Aorta (tissue), 5 donors: ENCODE measurements at regions of chr7 and their contacts with region 1.

Region 1: DNA sequence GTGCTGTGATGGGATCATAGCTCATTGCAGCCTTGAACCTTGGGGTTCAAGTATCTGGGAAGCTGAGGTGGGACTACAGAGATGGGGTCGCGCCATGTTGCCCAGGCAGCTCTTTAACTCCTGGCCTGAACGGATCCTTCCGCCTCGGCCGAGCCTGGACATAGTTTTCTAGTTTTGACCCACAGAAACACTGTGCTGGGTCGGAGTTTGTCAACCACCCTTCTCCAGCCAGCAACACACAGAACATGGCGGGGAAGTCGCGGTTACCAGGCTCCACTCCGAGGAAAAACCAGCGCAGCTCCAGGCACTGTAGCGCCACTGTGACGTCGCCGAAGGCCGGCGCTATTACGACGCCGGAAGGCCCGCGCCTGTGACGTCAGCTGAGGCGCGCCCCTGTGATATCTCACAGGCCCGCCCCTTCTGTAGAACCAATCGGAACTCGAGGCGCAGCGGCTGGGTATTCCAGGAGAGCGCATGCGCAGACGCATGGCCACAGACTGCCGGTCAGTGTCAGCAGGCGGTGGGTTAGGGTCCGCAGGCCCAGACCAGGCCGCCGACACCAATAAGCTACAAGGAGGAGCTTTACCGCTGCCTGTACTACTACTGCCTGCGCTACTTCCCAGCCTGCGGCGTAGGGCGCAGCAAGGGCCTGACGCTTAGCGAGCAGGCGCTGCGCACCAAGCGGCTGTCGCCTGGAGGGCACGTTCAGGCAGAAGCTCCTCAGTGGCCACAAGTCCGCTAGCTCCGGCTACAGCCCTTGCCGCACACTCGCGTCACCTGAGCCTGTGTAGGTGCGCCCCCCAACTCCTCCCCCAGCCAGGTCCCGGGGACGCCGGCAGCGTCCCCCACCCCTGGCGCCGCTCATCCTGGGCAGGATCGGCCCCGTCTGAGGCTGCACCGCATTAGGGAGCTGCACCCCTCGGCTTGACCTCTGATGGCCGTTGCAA is 135.2 kb upstream of the KCTD7 start:
- DNase-seq: peak; percentile 99
- ATAC-seq: peak; percentile 100
- H3K4me3 ChIP-seq: peak overlapping the region; percentile 53 to 59
- H3K27ac ChIP-seq: peak overlapping the region; percentile 49 to 84
- H3K4me1 ChIP-seq: peaks cover 0 to 5% of the 10 kb centered on the region in 2 donors
- H3K27me3 ChIP-seq: no peaks in the 10 kb centered on the region

Region 2: GRCh38 chr7:66140924-66141323 is 352.6 kb before region 1 on chr7:
- intact Hi-C with region 1: loop called in 1 of 2 experiments (anchors 10 kb)
- DNase-seq: peak in 1 of 2 donors; percentile 83
- ATAC-seq: peak; percentile 88
- H3K4me3 ChIP-seq: no peak overlapping the region
- H3K27ac ChIP-seq: no peak overlapping the region
- H3K4me1 ChIP-seq: no peaks in the 10 kb centered on the region
- H3K27me3 ChIP-seq: no peaks in the 10 kb centered on the region